Activated T-helper 1 cell treated with anti-CD3 and anti-CD28 coated beads, Interleukin-12 subunit alpha, Interleukin-12 subunit beta, Interleukin-2, Interleukin-4 antibody, amounts not matched to agents 30 ng/mL and 10 ng/mL and 1 ng/mL, durations not matched to agents 14 hours and 24 hours and 36 hours (primary cell): ENCODE measurements at regions of chr17 and their contacts with region 1.

Region 1: GRCh38 chr17:59565171-59565969 is at the start of gene DHX40:
- DNase-seq: peak; percentile 90
- H3K4me3 Mint-ChIP-seq: peak within 1 kb of the TSS; percentile 100
- H3K27ac Mint-ChIP-seq: peak within 1 kb of the TSS; percentile 100
- H3K4me1 Mint-ChIP-seq: peaks cover 24% of the 10 kb centered on the region
- H3K27me3 Mint-ChIP-seq: peaks cover 7% of the 10 kb centered on the region
- total RNA-seq, gene DHX40: 16.8 and 17.1 TPM in 2 replicates

Region 2: DNA sequence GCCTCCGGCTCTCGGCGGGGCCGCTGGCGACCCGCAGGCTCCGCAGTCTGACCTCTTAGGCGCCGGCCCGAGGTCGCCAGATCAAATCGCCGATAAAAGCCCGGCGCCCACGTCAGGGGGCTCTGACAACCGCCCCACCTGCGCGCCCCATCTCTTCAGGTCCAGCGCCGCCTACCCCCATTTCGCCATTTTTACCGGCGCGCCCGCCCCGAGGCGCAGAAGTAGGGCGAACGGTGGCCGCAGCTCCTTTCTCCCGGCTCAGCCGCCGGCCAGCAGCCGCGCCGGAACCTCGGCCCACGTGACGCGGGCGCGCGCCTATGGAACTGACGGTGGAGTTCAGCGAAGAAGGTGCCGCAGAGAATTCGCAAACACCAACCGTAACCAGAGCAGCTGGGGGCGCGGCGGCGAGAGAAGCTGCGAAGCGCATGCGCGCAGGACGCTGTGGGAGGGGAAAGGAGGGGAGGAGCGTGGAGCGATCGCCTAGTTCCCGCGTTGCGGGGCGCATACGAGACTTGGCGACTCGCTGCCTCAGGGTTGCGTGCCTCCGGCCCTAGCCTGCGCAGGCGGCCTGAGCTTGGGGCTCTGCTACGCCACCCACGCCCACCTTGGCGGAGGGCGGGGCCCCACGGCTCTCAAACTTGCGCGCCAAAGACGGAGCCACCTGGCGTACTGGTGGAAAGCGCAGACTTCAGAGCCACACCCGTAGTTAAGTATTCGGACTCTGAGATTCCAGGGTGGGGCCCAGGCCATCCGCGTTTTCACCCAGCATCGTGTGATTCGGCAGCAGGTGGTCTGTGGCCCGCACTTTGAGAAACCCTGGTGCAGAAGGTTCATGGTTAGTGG is 458.7 kb before region 1 on chr17 and contains the start of gene TRIM37:
- intact Hi-C with region 1: loop called (anchors 2 kb)
- DNase-seq: peak; percentile 100
- H3K4me3 Mint-ChIP-seq: peak within 1 kb of the TSS; percentile 97
- H3K27ac Mint-ChIP-seq: peak within 1 kb of the TSS; percentile 90
- H3K4me1 Mint-ChIP-seq: peaks cover 66% of the 10 kb centered on the region
- H3K27me3 Mint-ChIP-seq: peaks cover 1% of the 10 kb centered on the region
- total RNA-seq, gene TRIM37: 27.5 and 27.7 TPM in 2 replicates

Region 3: DNA sequence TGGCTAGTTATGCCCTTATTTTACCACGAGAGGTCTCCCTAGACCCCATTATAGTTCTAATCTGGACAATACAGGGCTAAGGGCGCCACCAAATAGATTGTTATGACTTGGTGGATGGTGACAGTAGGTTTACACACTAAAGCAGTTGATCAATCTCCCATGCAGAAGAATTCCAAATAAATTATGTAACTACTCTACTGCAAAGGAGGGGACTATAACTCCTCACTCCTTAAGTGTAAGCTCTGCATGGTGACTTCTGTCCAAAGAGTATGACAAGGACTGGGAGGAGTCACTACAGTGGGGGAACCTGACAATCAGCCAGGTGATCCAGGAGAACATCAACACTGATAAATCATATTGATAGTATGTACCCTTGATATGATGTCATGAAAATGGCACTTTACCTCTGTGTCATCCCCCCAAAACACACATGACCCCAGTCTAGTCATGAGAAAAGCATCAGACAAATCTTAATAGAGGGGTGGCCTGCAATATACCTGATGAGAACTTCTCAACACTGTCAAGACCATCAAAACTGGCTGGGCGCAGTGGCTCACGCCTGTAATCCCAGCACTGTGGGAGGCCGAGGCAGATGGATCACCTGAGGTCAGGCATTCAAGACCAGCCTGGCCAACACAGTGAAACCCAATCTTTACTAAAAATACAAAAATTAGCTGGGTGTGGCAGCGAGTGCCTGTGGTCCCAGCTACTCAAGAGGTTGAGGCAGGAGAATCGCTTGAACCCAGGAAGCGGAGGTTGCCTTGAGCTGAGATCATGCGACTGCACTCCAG is 254.0 kb before region 1 on chr17:
- intact Hi-C with region 1: loop called (anchors 5 kb)
- DNase-seq: peak; percentile 40
- H3K4me3 Mint-ChIP-seq: no peak overlapping the region
- H3K27ac Mint-ChIP-seq: no peak overlapping the region
- H3K4me1 Mint-ChIP-seq: peaks cover 8% of the 10 kb centered on the region
- H3K27me3 Mint-ChIP-seq: no peaks in the 10 kb centered on the region

Region 4: DNA sequence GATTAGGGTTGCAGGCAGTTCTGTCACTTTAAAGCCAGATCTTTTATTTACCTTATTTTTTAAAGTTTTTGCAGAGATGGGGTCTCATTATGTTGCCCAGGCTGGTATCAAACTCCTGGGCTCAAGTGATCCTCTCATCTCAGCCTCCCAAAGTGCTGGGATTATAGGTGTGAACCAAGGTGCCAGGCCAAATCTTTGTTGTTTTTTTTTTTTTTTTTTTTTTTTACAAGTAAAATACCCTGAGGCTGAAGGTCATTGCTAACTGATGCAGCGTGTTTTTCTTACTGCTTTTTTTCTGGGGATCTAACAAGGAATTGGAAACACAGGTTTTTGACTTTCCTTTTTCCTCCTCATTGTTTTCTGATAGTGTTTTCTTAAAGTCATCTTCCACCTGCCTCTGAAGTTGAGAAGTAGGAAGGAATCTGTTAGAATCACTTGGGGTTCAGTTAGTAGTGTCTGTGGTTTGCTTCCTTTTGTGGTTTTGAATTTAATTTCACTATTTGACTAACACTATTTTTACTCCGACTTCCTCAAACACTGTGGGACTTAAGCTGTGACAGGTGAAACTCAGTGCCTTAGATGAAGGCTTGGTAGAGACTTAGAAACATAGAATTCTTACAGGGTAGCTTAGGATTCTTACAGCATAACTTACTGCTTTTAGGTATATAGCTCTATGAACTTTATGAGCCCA is 76.6 kb after region 1 on chr17:
- intact Hi-C with region 1: loop called (anchors 1 kb)
- DNase-seq: peak; percentile 3
- H3K4me3 Mint-ChIP-seq: peak overlapping the region; percentile 16
- H3K27ac Mint-ChIP-seq: peak overlapping the region; percentile 72
- H3K4me1 Mint-ChIP-seq: peaks cover 50% of the 10 kb centered on the region
- H3K27me3 Mint-ChIP-seq: no peaks in the 10 kb centered on the region

Region 5: DNA sequence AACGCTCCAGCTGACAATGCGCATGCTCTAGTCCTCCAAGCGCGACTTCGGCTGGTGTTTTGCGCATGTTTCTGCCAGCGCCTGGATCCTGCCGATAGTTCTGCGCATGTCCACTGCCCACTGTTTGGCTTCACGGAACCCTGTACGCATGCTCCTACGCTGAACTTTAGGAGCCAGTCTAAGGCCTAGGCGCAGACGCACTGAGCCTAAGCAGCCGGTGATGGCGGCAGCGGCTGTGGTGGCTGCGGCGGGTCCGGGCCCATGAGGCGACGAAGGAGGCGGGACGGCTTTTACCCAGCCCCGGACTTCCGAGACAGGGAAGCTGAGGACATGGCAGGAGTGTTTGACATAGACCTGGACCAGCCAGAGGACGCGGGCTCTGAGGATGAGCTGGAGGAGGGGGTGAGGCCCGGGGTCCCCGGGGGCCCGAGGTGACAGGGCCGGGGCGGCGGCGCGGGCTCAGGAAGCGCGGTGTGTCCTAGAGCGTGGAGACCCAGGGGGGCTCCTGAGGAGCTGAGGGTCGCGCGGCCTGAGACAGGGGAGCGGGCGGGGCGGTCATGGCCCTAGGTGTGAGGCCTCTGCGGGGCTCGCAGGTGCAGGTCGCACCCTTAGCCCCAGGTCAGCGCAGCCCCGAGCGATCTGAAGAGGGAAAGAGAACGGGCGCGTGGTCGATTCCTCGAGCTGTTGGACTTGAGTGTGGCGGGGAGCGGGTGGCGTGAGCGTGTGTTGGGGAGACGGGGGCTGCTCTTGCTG is 327.7 kb after region 1 on chr17 and contains the starts of genes RPS6KB1 and TUBD1:
- intact Hi-C with region 1: loop called (anchors 1 kb)
- DNase-seq: peak; percentile 98
- H3K4me3 Mint-ChIP-seq: peak within 1 kb of the TSS; percentile 100
- H3K27ac Mint-ChIP-seq: peak within 1 kb of the TSS; percentile 99
- H3K4me1 Mint-ChIP-seq: peaks cover 58% of the 10 kb centered on the region
- H3K27me3 Mint-ChIP-seq: peaks cover 3% of the 10 kb centered on the region
- total RNA-seq, gene RPS6KB1: 67.6 and 82.7 TPM in 2 replicates
- total RNA-seq, gene TUBD1: 12.3 and 13.2 TPM in 2 replicates

Region 6: DNA sequence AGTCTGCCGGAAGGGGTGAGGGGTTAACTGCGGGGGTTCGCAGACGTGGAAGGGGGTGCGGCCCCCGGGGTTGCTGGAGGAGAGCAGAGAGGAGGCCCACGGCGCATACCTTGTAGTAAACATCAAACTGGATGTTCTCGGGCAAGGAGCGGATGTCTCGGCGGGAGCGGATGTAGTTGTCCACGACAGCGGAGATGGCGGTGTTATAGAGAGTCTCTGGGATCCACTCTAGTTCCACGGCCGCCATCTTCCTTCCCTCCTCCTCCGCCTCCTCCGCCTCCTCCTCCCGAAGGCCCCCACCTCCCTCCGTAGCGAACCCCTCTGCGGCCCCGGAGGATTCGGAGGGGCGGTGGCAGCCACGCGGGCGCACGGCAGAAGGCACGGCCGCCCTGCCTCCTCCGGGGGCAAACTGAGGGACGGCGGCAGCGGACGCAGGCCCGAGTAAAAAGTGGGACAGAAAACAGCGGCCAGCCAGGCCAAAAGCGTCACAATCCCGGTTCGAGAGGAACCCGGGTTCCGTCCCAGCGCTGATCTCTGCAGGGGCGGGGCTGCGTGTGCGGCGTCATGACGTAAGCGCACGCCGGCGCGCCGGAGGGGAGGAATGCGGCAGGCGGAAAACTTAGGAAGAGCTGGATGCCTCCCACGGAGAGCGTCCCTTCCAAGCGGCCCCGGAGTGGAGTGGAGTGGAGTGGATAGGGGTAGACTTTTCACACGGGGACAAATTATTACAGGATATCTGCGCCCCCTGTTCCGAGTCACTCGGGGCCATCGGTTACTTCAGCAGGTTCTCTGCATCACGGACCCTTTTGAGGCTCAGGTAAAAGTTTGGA is 960.5 kb after region 1 on chr17 and contains the start of gene APPBP2:
- intact Hi-C with region 1: loop called (anchors 10 kb)
- DNase-seq: peak; percentile 69
- H3K4me3 Mint-ChIP-seq: peak within 1 kb of the TSS; percentile 98
- H3K27ac Mint-ChIP-seq: peak within 1 kb of the TSS; percentile 96
- H3K4me1 Mint-ChIP-seq: peaks cover 49% of the 10 kb centered on the region
- H3K27me3 Mint-ChIP-seq: no peaks in the 10 kb centered on the region
- total RNA-seq, gene APPBP2: 23.4 and 28.1 TPM in 2 replicates